Adrenal gland (tissue), 19 donors: ENCODE measurements at regions of chr1 and their contacts with region 1.

Region 1: GRCh38 chr1:160193091-160193819 is 2.9 kb downstream of the CASQ1 start:
- DNase-seq: peak; percentile 82 to 93 (median 89)
- H3K4me3 ChIP-seq: no peak overlapping the region
- H3K27ac ChIP-seq: no peak overlapping the region
- H3K4me1 ChIP-seq: peaks cover 7 to 9% of the 10 kb centered on the region in 2 donors
- H3K27me3 ChIP-seq: no peaks in the 10 kb centered on the region
- CTCF ChIP-seq: peak; percentile 97 to 99 (median 98)
- POLR2A ChIP-seq: no peak

Region 2: DNA sequence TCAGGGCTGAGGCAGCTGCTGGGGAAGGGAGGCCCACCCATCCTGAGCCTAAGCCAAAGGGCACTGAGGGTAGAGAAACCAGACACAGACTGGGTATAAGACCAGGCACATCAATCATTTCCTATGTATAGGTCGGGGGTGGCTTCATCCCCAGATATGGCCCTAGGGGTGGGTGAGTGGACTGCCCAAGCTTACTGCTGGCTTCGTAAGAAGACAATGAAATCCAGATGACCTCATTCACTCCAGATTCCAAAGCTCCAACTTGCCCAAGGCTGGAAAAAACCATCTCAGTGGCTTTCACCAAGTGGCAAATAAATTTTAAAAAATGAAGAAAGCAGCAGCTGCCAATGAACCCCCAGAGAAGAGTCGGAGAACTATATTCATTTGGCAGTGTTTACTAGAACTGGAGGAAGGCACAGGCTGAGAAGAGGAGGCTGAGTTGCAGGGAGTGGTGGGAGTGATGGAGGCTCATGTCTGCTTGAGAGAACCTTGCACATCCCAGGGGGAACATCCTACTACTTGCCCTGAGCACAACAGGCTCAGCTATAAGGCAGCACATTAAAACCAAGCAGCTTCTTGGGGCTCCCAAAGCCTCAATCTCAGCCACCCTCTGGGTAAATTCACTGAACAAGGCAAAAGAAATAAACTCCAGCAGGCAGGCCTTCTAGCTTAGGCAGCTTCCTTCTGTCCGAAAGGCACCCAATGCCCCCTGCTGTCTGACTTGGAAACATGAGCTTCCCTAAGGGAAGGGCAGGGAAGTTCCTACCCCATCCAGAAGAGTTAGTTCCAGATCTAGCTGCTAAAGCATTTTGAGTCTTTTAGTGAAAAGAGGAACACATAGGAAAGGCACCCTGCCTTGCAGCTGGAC is 26.0 kb after region 1 on chr1:
- intact Hi-C with region 1: loop called in 1 of 2 experiments (anchors 2 kb)
- DNase-seq: peak; percentile 56 to 80 (median 67)
- H3K4me3 ChIP-seq: no peak overlapping the region
- H3K27ac ChIP-seq: peak overlapping the region in 3 of 5 donors; percentile 41 to 70 (median 61)
- H3K4me1 ChIP-seq: peaks cover 0 to 13% of the 10 kb centered on the region in 2 donors
- H3K27me3 ChIP-seq: no peaks in the 10 kb centered on the region
- CTCF ChIP-seq: peak; percentile 16 to 74 (median 60)
- POLR2A ChIP-seq: no peak

Region 3: GRCh38 chr1:160244209-160244608 is 51.0 kb after region 1 on chr1:
- intact Hi-C with region 1: loop called in 1 of 2 experiments (anchors 10 kb)
- DNase-seq: no peak
- H3K4me3 ChIP-seq: no peak overlapping the region
- H3K27ac ChIP-seq: no peak overlapping the region
- H3K4me1 ChIP-seq: peaks cover 0 to 12% of the 10 kb centered on the region in 2 donors
- H3K27me3 ChIP-seq: no peaks in the 10 kb centered on the region
- CTCF ChIP-seq: no peak
- POLR2A ChIP-seq: no peak

Region 4: GRCh38 chr1:160251687-160252526 is 58.7 kb after region 1 on chr1:
- intact Hi-C with region 1: loop called (anchors 10 kb)
- DNase-seq: peak; percentile 72 to 90 (median 80)
- H3K4me3 ChIP-seq: no peak overlapping the region
- H3K27ac ChIP-seq: peak overlapping the region in 1 of 5 donors; percentile 22
- H3K4me1 ChIP-seq: peaks cover 0 to 19% of the 10 kb centered on the region in 2 donors
- H3K27me3 ChIP-seq: no peaks in the 10 kb centered on the region
- CTCF ChIP-seq: peak; percentile 55 to 87 (median 84)
- POLR2A ChIP-seq: no peak

Region 5: GRCh38 chr1:160291248-160292220 is 98.3 kb after region 1 on chr1:
- intact Hi-C with region 1: loop called (anchors 5 kb)
- DNase-seq: peak; percentile 63 to 89 (median 77)
- H3K4me3 ChIP-seq: no peak overlapping the region
- H3K27ac ChIP-seq: peak overlapping the region in 2 of 5 donors; percentile 42 to 67
- H3K4me1 ChIP-seq: peaks cover 0 to 6% of the 10 kb centered on the region in 2 donors
- H3K27me3 ChIP-seq: no peaks in the 10 kb centered on the region
- CTCF ChIP-seq: peak; percentile 73 to 83 (median 80)
- POLR2A ChIP-seq: no peak

Region 6: DNA sequence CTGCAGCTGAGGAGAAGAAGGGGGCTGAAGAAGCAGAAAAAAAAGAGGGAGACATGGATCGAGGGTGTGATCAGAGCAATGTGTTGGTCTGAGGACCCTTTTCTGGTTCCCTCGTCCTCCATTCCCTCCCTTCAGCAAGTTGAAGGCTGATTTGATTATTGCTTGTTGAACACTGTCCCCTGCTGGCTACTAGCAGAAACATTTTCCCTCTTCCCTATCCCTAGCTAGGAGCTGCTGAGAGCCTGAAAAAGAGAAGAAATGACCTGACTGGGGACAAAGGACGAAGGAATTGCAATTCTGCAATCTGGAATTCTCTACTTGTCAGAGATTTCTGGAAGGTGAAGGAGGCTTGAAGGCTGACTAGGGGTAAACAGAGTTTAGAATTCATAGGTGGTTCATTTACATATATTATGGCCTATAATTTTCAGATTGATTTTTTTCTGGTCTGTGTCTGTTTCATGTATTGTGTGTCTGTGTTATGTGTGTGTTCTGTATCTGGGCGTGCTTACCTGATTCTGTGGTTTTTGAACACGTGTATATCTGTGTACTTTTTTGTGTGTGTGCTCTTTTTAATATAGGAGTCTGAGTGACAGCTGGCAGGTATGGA is 183.4 kb after region 1 on chr1:
- intact Hi-C with region 1: loop called (anchors 10 kb)
- DNase-seq: peak in 6 of 7 donors; percentile 18 to 59 (median 36)
- H3K4me3 ChIP-seq: no peak overlapping the region
- H3K27ac ChIP-seq: no peak overlapping the region
- H3K4me1 ChIP-seq: peaks cover 0 to 8% of the 10 kb centered on the region in 2 donors
- H3K27me3 ChIP-seq: peaks cover 10% of the 10 kb centered on the region
- CTCF ChIP-seq: peak; percentile 80 to 98 (median 91)
- POLR2A ChIP-seq: no peak